Aorta (tissue), 5 donors: ENCODE measurements at regions of chrX and their contacts with region 1.

Region 1: DNA sequence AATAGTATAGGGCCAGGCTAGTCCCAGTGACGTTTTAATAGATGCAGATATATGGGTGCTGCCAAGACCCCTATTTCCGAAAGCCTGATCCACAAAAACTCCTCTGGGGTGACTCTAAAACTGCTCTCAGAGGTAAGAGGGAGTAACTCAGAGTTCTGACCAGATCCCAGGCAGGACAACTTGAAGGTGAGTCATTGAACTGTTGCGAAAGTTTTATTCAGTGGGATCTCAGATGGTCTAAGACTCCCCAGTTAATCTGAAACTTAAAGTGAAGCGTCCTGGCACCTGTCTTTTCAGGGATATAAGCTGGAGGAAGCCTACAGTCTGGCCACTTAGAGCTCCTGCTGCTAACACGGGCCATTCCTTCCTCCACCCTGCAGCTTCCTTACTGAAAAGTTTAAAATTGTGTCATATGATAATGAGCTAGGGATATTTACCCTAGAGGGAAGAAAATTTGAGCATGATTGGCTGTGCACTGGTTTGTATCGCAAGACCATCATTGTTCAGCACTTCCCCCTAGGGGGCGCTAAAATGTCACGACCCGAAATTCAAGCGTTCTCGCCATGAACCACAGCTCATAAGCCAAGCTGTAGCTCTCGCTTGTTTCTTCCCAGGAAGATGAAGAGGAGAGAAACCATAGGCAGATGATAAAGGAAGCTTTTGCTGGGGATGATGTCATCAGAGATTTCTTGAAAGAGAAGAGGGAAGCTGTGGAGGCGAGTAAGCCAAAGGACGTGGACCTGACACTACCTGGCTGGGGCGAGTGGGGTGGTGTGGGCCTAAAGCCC is 19.5 kb downstream of the UTP14A start:
- DNase-seq: peak; percentile 75 to 80
- ATAC-seq: peak; percentile 83
- H3K4me3 ChIP-seq: no peak overlapping the region
- H3K27ac ChIP-seq: no peak overlapping the region
- H3K4me1 ChIP-seq: no peaks in the 10 kb centered on the region
- H3K27me3 ChIP-seq: no peaks in the 10 kb centered on the region

Region 2: DNA sequence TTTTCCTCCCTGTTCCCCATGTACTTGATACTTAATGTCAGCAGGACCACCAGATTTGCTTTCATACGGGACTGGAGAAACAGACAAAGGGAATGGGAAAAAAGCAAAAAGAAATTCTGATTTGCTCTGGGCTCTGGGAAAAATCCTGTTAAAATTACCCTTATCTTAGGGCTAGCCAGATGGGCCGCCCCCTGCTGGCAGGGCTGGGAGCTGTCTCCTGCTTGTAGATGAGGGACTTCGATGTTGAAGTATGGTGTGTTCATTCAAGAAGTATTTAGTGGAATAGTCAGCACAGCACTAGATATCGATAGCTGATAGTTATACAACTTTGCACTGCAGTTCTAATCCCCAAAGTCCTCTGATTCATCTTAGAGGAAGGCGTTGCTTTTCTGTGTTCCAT is 102.7 kb after region 1 on chrX:
- intact Hi-C with region 1: loop called in 1 of 2 experiments (anchors 2 kb)
- DNase-seq: no peak
- ATAC-seq: no peak
- H3K4me3 ChIP-seq: no peak overlapping the region
- H3K27ac ChIP-seq: no peak overlapping the region
- H3K4me1 ChIP-seq: no peaks in the 10 kb centered on the region
- H3K27me3 ChIP-seq: no peaks in the 10 kb centered on the region

Region 3: DNA sequence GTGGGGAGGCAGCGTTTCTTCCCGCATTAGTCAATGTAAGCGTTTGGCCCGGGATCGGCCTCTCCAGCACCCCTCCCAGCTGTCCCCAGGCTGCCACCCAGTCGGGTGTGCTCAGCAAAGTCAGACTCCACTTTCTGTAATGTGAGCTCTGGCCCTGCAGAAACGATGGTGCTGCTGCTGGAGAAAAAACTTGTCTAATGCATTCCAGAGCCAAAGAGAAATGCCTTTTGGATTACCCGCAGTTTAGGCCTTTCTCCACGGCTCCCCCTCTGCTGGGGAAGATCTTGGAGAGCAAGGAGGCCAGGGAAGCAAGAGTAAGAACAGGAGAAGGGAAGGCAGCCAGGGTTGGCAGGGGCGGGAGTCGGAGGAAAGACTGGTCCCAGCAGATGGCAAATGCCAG is 129.6 kb after region 1 on chrX:
- intact Hi-C with region 1: loop called (anchors 2 to 5 kb)
- DNase-seq: peak in 1 of 2 donors; percentile 66
- ATAC-seq: peak; percentile 53
- H3K4me3 ChIP-seq: no peak overlapping the region
- H3K27ac ChIP-seq: peak overlapping the region in 1 of 2 donors; percentile 34
- H3K4me1 ChIP-seq: no peaks in the 10 kb centered on the region
- H3K27me3 ChIP-seq: no peaks in the 10 kb centered on the region